ENCODE measurements at regions of chr1 and their contacts with region 1.

Region 1: DNA sequence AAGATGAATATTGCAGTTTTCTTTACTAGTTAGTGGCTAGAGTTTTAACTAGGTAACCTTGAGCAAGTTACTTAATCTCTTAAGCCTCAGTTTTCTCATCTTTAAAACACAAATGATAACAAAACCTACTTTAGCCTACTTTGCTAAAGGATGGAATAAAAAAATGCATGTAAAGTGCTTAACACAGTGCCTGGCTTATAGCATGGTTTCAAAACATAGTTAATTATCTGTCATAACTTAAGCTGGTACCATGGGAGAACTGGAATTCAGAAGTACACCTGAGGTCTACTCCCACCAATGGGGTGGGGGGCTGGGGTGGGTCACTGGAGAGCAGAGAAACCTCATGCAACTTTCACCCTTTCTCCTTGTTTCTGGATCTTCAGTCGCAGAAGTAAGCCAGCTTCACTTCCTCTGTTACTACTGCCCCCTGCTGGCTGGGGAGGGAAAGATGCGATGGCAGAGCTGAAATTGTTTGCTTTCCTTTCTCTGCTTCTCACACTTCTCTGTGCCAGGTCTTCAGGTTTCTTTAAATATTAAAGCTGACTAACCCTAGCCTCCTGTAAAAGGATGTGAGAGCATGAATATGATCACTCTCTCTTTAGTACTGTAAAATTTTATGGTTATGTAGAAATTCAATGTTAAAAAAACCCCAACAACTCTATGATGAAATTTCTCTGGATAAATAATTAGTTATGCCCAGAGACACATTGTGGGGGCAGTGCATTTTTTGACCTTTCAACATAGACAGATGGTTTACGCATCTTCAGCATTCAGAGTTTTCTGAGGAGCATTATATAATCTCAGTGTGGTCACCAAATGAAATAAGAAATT is 324.2 kb downstream of the HLX start:
- DNase-seq: peak; percentile 62
- H3K4me3 ChIP-seq: no peak overlapping the region; a peak in 1 of 4 replicates
- H3K27ac ChIP-seq: peak overlapping the region in 1 of 2 experiments; percentile 55; a peak in 2 of 4 replicates
- H3K4me1 ChIP-seq: no peaks in the 10 kb centered on the region; a peak in 1 of 4 replicates
- H3K27me3 ChIP-seq: no peaks in the 10 kb centered on the region
- CTCF ChIP-seq: peak; percentile 89
- EP300 ChIP-seq: no peak
- RAD21 ChIP-seq: peak; percentile 93

Region 2: GRCh38 chr1:220884981-220885918 is 318.2 kb before region 1 on chr1:
- CTCF ChIA-PET with region 1: interaction called, 12 read pairs
- POLR2A ChIA-PET with region 1: no interaction called
- DNase-seq: no peak
- H3K4me3 ChIP-seq: no peak overlapping the region
- H3K27ac ChIP-seq: no peak overlapping the region
- H3K4me1 ChIP-seq: peaks cover 0 to 13% of the 10 kb centered on the region in 2 experiments; a peak in 2 of 4 replicates
- H3K27me3 ChIP-seq: no peaks in the 10 kb centered on the region
- CTCF ChIP-seq: no peak
- EP300 ChIP-seq: no peak
- RAD21 ChIP-seq: no peak

Region 3: DNA sequence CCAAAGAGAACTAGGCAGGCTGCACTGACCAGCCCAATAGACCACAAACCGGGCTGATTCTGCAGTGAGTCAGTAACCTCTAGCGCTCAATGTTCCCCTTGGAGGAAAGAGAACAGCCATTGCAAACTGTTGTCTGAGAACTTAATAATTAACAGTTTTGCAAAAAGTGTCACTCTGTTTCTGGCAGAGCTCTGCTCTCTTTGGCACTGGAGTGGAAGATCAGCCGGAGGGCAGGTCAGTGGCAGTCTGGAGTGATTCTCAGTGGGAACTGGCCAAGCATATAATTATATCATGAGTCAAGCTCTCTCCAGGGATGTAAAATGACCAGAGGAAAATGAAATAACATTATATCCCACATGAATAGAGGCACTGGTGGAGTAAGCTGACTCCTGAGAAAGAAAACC is 85.9 kb before region 1 on chr1:
- CTCF ChIA-PET with region 1: interaction called, 11 read pairs
- POLR2A ChIA-PET with region 1: no interaction called
- DNase-seq: peak; percentile 49
- H3K4me3 ChIP-seq: no peak overlapping the region
- H3K27ac ChIP-seq: peak overlapping the region; percentile 74 to 88
- H3K4me1 ChIP-seq: peaks cover 17 to 24% of the 10 kb centered on the region in 2 experiments
- H3K27me3 ChIP-seq: no peaks in the 10 kb centered on the region
- CTCF ChIP-seq: no peak
- EP300 ChIP-seq: peak; percentile 25 to 73; a peak in 2 of 4 replicates
- RAD21 ChIP-seq: no peak

Region 4: DNA sequence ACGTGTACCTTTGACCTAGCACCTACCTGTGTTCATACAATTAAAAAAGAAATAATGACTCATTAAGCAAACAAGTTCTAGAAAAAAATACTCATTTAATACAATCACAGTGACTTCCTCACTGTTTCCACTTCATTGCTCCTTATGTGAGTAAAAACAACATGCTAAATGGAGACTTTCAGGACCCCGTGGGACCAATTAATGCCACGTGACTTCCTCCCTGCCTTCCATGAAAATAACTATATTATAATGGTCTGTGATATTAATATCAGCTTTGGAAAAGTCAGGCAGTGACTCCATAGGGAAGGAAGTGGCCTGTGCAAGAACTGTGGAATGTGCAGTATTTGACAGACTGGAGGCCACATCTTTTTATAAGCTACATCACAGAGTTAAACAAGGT is 13.6 kb after region 1 on chr1:
- CTCF ChIA-PET with region 1: interaction called, 16 read pairs
- POLR2A ChIA-PET with region 1: no interaction called
- DNase-seq: no peak
- H3K4me3 ChIP-seq: no peak overlapping the region
- H3K27ac ChIP-seq: no peak overlapping the region; a peak in 1 of 4 replicates
- H3K4me1 ChIP-seq: no peaks in the 10 kb centered on the region
- H3K27me3 ChIP-seq: no peaks in the 10 kb centered on the region
- CTCF ChIP-seq: no peak
- EP300 ChIP-seq: no peak
- RAD21 ChIP-seq: no peak

Region 5: DNA sequence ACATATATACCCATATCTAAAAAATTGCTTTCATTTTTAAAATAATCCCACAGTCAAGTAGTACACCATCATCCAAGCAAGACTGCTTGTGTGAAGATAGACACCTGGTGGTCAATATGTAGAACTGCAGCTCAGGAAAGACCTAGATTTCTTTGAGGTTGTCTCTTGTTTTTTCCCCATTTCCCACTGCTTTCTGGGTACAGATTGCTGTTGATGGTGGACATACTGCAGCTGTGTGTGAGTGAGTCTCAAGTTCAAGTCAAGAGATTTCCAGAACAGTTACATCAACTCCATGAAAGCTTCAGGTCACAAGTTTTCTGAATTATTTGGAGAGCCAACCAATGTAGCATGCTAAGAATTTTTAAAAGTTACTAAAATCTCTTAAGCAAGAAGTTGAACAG is 232.1 kb after region 1 on chr1:
- CTCF ChIA-PET with region 1: interaction called, 20 read pairs
- POLR2A ChIA-PET with region 1: no interaction called
- DNase-seq: peak; percentile 58
- H3K4me3 ChIP-seq: no peak overlapping the region; a peak in 1 of 4 replicates
- H3K27ac ChIP-seq: peak overlapping the region in 1 of 2 experiments; percentile 16; a peak in 1 of 4 replicates
- H3K4me1 ChIP-seq: peaks cover 12 to 14% of the 10 kb centered on the region in 2 experiments; a peak in 3 of 4 replicates
- H3K27me3 ChIP-seq: no peaks in the 10 kb centered on the region
- CTCF ChIP-seq: peak; percentile 96
- EP300 ChIP-seq: no peak
- RAD21 ChIP-seq: peak; percentile 93